ENCODE measurements at regions of chr11 and their contacts with region 1.

Region 1: DNA sequence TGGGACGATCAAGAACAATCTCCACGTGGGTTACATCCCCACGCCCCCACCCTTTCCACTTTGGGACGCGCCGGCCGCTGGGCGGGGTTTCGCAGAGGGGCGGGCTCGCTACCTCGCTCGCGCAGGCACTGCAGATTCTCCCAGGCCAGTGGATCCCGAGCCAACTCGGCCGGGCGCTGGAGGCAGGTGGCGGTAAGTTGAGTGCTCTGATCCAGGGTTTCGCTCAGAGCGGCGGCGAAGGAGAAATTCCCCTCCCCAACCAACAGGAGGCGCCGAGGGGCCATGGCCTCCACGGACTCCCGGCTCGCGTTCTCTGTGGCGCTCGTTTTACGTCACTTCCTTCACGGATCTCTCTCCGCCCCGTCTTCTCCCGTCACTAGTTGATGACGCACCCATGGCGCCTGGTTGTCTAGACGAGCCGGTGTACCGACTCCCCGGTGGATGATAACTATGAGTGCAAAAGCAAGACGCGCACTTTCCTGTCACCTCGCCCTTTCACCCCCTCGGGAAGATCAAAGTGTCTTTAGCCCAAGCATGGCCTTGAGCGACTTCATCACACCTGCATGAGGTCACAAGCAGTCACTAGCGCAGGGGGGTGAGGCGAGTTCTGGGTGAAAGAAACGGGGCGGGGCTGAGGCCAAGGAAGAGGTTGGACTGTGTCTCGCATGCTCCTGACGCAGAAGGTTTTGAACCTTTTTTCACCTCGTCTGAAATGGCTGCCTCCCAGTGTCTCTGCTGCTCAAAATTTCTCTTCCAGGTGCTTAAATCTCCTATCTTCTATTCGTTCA is at the starts of genes CFAP68 and FDXACB1:
- DNase-seq: peak; percentile 89 to 99
- H3K4me3 ChIP-seq: peak within 1 kb of the TSS; percentile 71 to 74
- H3K27ac ChIP-seq: peak within 1 kb of the TSS; percentile 90 to 97
- H3K4me1 ChIP-seq: peaks cover 0 to 11% of the 10 kb centered on the region in 2 donors
- H3K27me3 ChIP-seq: no peaks in the 10 kb centered on the region
- CTCF ChIP-seq: peak; percentile 97 to 98 (median 98)
- total RNA-seq, gene CFAP68: not detected
- total RNA-seq, gene FDXACB1: 0.53 TPM

Region 2: GRCh38 chr11:111996129-111996528 is 117.1 kb after region 1 on chr11:
- intact Hi-C with region 1: loop called (anchors 5 kb)
- DNase-seq: no peak
- H3K4me3 ChIP-seq: no peak overlapping the region
- H3K27ac ChIP-seq: no peak overlapping the region
- H3K4me1 ChIP-seq: no peaks in the 10 kb centered on the region
- H3K27me3 ChIP-seq: no peaks in the 10 kb centered on the region
- CTCF ChIP-seq: no peak

Region 3: GRCh38 chr11:112086422-112087191 is 207.6 kb after region 1 on chr11 and contains the starts of genes SDHD and TIMM8B:
- intact Hi-C with region 1: loop called (anchors 2 kb)
- DNase-seq: peak; percentile 85 to 98
- H3K4me3 ChIP-seq: peak within 1 kb of the TSS; percentile 86 to 94
- H3K27ac ChIP-seq: peak within 1 kb of the TSS; percentile 63 to 75
- H3K4me1 ChIP-seq: peaks cover 5 to 23% of the 10 kb centered on the region in 2 donors
- H3K27me3 ChIP-seq: no peaks in the 10 kb centered on the region
- CTCF ChIP-seq: peak in 2 of 3 experiments; percentile 34 to 36
- total RNA-seq, gene SDHD: 68.5 TPM
- total RNA-seq, gene TIMM8B: 28.9 TPM

Measured in ascending aorta (tissue), 2 donors.